Colonic mucosa (tissue), 4 donors: ENCODE measurements at regions of chr16 and their contacts with region 1.

Region 1: GRCh38 chr16:4200000-4200780 is 41.7 kb downstream of the SRL start:
- DNase-seq: peak; percentile 84
- H3K4me3 ChIP-seq: no peak overlapping the region
- H3K27ac ChIP-seq: no peak overlapping the region
- H3K4me1 ChIP-seq: no peaks in the 10 kb centered on the region
- H3K27me3 ChIP-seq: no peaks in the 10 kb centered on the region
- CTCF ChIP-seq: peak; percentile 64

Region 2: GRCh38 chr16:3938848-3939624 is 261.2 kb before region 1 on chr16:
- intact Hi-C with region 1: no loop called
- DNase-seq: peak; percentile 46
- H3K4me3 ChIP-seq: peak overlapping the region; percentile 37
- H3K27ac ChIP-seq: no peak overlapping the region
- H3K4me1 ChIP-seq: no peaks in the 10 kb centered on the region
- H3K27me3 ChIP-seq: no peaks in the 10 kb centered on the region
- CTCF ChIP-seq: peak; percentile 95

Region 3: GRCh38 chr16:4253394-4254150 is 53.4 kb after region 1 on chr16:
- intact Hi-C with region 1: loop called (anchors 5 kb)
- DNase-seq: peak; percentile 100
- H3K4me3 ChIP-seq: peak overlapping the region; percentile 54
- H3K27ac ChIP-seq: peak overlapping the region; percentile 95
- H3K4me1 ChIP-seq: no peaks in the 10 kb centered on the region
- H3K27me3 ChIP-seq: no peaks in the 10 kb centered on the region
- CTCF ChIP-seq: no peak

Region 4: DNA sequence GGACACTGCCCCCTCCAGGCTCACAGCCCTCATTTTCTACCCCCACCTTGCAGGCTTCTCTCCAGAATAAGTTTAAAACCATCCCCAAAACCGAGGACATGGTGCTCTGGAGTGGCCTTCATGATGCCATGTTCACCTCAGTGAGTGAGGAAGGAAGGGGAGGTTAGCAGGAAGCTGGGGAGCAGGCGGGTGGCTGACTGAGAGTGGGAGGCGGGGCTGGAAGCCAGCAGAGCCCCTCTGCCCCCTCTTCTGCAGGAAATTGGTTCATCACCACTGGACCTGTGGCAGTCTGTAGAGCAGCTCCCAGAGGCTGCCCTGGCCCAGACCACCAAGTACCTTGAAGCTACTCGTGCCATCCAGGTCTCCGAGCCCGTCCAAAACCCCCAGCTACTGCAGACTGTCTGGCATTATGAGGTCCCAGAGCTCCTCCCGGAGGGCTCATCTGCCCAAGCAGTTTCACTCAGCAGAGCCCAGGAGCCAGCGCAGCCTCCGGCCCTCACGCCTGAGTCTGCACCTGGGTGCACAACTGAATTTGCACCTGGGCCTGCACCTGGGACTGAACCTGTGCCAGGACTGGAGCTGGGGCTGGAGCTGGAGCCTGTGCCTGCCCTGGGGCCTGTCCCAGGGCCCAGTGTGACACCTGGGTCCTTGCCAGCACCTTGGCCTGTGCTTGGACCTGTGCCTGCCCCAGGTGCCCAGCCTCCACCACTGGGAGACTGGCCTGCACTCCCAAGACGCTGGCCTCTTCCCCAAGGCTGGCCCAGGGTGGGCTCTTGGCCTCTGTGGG is 374.9 kb after region 1 on chr16:
- intact Hi-C with region 1: no loop called
- DNase-seq: no peak
- H3K4me3 ChIP-seq: no peak overlapping the region
- H3K27ac ChIP-seq: no peak overlapping the region
- H3K4me1 ChIP-seq: no peaks in the 10 kb centered on the region
- H3K27me3 ChIP-seq: no peaks in the 10 kb centered on the region
- CTCF ChIP-seq: no peak